RWPE1 (cell line): ENCODE measurements at regions of chr14 and their contacts with region 1.

Region 1: GRCh38 chr14:51780006-51780692 is 80.3 kb upstream of the GNG2 start:
- DNase-seq: peak; percentile 77
- H3K27ac ChIP-seq: no peak overlapping the region
- CTCF ChIP-seq: peak; percentile 87

Region 2: DNA sequence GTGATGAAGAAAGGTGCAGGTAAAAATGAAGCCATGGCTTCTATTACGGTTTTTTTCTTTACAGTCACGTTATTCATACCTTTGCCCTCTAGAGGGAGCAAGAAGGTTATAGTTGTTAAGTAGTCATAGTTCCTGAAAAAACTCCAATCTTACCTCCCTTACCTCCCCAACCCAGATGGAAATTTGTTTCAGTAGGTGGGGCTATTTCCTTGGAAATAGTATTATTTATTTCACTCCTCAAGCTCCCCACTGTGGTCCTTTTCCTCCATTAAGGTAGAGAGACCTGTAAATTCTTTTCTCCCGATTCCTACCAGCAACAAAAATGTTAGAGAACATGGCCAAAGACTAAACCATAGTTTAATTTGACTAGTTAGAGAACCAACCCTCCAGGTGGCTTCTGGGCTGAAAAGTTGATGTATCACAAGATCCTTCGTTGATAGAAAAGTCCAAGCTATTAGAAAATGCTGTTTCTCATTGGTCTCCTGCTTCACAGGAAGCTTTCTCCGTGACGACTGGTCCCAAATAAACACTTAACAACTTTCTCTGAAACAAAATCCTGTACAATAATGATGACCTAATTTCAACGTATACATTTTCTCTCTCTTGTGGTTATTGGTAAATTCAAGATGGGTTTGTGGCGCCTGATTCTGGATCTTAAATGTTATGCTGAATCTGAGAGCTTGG is 496.6 kb before region 1 on chr14:
- CTCF ChIA-PET with region 1: interaction called, 19 read pairs
- POLR2A ChIA-PET with region 1: no interaction called
- DNase-seq: peak; percentile 92
- H3K27ac ChIP-seq: no peak overlapping the region
- CTCF ChIP-seq: peak; percentile 84

Region 3: DNA sequence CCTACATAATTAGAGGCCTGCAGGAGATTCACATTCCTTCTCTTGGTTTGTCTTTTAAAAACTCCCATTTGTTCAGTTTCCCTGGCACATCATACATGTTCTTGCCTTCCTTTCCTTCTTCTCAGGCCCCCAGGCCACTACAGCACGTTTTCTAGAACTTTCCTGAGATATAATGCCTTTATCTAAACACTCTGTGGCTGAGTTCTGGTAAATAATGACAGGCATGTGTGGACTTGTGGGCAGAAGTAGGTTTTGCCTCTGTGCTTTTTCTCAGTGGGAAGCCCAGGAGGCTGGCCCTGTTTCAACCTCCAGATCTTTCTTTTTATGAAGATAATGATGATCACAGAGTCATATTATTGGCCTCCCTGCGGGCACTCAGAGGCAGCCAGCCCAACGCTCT is 422.9 kb before region 1 on chr14:
- CTCF ChIA-PET with region 1: no interaction called
- POLR2A ChIA-PET with region 1: no interaction called
- DNase-seq: no peak
- H3K27ac ChIP-seq: no peak overlapping the region
- CTCF ChIP-seq: no peak

Region 4: GRCh38 chr14:52060080-52060479 is 279.9 kb after region 1 on chr14:
- CTCF ChIA-PET with region 1: no interaction called
- POLR2A ChIA-PET with region 1: no interaction called
- DNase-seq: no peak
- H3K27ac ChIP-seq: no peak overlapping the region
- CTCF ChIP-seq: no peak